ENCODE measurements at regions of chr3 and their contacts with region 1.

Region 1: DNA sequence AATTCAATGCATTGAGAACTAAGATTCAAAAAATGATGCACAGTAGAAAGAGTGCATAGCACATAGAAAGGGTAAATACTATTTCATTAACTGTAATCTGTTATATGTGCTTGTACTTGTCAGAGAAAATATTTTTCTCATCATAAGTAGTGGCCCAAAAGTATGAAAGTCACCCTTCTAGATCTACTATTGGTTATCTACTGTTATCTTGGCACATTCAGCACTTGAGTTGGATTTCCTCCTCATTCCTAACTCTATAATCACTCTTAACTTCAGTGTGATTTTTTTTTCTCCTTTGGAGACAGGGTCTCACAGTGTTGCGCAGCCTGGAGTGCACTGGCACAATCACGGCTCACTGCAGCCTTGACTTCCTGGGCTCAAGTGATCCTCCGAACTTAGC is 194.4 kb downstream of the PCCB start:
- DNase-seq: no peak
- ATAC-seq: no peak
- H3K4me3 ChIP-seq: no peak overlapping the region
- H3K27ac ChIP-seq: no peak overlapping the region
- H3K4me1 ChIP-seq: no peaks in the 10 kb centered on the region
- H3K27me3 ChIP-seq: no peaks in the 10 kb centered on the region
- CTCF ChIP-seq: no peak
- POLR2A ChIP-seq: no peak

Region 2: GRCh38 chr3:135292162-135292561 is 1152.4 kb before region 1 on chr3:
- in situ Hi-C with region 1: no loop called
- intact Hi-C with region 1: loop called (anchors 10 kb)
- DNase-seq: no peak
- ATAC-seq: no peak
- H3K4me3 ChIP-seq: no peak overlapping the region
- H3K27ac ChIP-seq: no peak overlapping the region
- H3K4me1 ChIP-seq: no peaks in the 10 kb centered on the region
- H3K27me3 ChIP-seq: no peaks in the 10 kb centered on the region
- CTCF ChIP-seq: no peak
- POLR2A ChIP-seq: no peak

Measured in gastrocnemius medialis (tissue), 4 donors.